GM18951 (cell line): ENCODE measurements at regions of chr6 and their contacts with region 1.

Region 1: GRCh38 chr6:84227434-84228197 is at the start of gene CEP162:
- POLR2A ChIP-seq: peak; percentile 53

Region 2: DNA sequence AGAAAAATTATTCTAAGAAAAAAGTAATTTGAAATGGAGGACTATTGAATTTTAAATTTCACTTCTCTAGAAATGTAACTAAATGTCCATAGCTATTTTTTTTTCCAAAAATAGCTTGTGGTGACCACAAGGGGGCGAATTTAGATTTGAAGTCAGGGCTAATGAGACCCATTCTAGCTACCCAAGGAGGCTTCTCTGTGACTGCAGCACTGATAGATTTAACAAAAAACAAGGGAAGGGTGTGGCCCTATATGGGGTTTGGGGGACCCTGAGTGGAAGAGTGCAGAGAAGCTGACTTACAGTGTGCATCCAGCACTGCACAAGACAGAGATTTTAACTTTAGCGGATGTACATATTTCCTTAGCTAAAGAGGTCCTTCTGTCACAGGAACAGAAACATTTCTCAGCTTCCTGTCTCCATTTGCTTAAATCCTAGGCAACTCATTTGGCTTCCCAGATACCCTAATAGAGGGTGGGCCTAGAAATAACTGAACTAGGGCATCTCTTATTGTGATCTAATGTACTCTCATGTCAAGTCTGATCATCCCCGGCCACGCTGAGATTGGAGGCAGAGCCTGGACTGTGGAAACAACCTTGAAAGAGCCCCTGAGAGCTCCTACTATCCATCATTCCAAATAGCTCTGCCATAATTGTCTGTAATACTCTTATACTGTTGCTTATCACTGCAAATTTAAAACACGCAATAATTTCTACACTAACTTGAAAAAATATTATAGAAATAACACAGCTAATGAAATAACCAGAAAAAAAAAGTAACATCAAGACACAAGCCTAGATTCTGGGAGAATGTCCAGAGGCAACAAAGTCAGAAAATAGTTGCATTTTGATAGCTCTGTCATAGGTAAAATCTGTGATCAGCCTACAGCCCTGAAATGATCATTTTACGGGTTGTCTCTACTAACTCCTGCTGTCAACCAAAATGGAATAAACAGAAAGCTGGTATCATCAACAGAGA is 612.3 kb before region 1 on chr6:
- in situ Hi-C with region 1: loop called (anchors 25 kb)
- POLR2A ChIP-seq: no peak

Region 3: GRCh38 chr6:83893024-83893423 is 334.6 kb before region 1 on chr6:
- in situ Hi-C with region 1: loop called (anchors 10 kb)
- POLR2A ChIP-seq: no peak

Region 4: DNA sequence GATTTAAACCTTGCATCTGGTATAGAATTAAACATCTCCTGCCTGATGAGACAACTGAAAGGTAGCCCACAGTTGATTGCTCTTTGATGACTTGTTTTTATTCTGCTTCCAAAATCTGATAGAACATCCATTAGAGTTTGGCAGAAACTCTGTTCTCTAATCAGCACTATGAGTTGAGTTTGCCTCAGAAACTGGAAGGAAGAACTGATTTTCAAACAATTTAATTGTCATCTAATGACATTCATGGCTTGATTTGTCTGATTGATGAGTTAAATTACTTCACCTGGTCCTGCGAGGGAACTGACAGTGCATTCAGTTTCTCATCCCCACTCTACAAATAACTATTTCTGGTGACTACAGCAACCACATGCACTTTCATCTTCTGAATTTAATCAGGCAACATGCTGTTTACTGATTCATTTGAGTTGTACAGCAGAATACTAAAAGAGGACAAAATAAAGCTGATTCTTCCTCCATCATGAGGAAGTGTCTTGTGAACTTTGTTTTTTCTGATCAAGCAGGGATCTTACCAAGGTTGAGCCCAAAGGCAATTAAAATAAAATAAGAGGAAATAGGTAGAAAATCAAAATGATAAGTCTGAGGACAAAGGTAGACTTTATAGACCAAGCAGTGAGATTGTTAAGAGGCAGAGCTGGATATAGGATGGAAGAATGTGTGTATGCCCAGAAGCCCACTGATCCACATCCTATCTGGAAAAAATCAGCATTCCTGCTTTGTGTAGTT is 209.7 kb before region 1 on chr6:
- in situ Hi-C with region 1: no loop called
- POLR2A ChIP-seq: no peak

Region 5: GRCh38 chr6:84809455-84809854 is 581.8 kb after region 1 on chr6:
- in situ Hi-C with region 1: no loop called
- POLR2A ChIP-seq: no peak